PC-9 (cell line): ENCODE measurements at regions of chr14 and their contacts with region 1.

Region 1: GRCh38 chr14:63770187-63770807 is 42.4 kb upstream of the SGPP1 start:
- DNase-seq: peak; percentile 36 to 50
- H3K4me3 ChIP-seq: no peak overlapping the region
- H3K27ac ChIP-seq: no peak overlapping the region
- H3K4me1 ChIP-seq: no peaks in the 10 kb centered on the region
- H3K27me3 ChIP-seq: no peaks in the 10 kb centered on the region
- CTCF ChIP-seq: peak; percentile 84

Region 2: GRCh38 chr14:63388763-63389431 is 381.4 kb before region 1 on chr14:
- CTCF ChIA-PET with region 1: no interaction called
- POLR2A ChIA-PET with region 1: no interaction called
- intact Hi-C with region 1: loop called (anchors 1 kb)
- DNase-seq: peak in 1 of 2 experiments; percentile 57
- H3K4me3 ChIP-seq: no peak overlapping the region
- H3K27ac ChIP-seq: no peak overlapping the region
- H3K4me1 ChIP-seq: no peaks in the 10 kb centered on the region
- H3K27me3 ChIP-seq: no peaks in the 10 kb centered on the region
- CTCF ChIP-seq: peak; percentile 84

Region 3: GRCh38 chr14:63632932-63633514 is 137.3 kb before region 1 on chr14:
- CTCF ChIA-PET with region 1: no interaction called
- POLR2A ChIA-PET with region 1: no interaction called
- intact Hi-C with region 1: loop called (anchors 1 kb)
- DNase-seq: peak in 1 of 2 experiments; percentile 44
- H3K4me3 ChIP-seq: no peak overlapping the region
- H3K27ac ChIP-seq: no peak overlapping the region
- H3K4me1 ChIP-seq: no peaks in the 10 kb centered on the region
- H3K27me3 ChIP-seq: no peaks in the 10 kb centered on the region
- CTCF ChIP-seq: peak; percentile 75

Region 4: GRCh38 chr14:63705561-63706070 is 64.7 kb before region 1 on chr14:
- CTCF ChIA-PET with region 1: interaction called, 3 read pairs
- POLR2A ChIA-PET with region 1: interaction called, 18 read pairs
- intact Hi-C with region 1: no loop called
- DNase-seq: no peak
- H3K4me3 ChIP-seq: no peak overlapping the region
- H3K27ac ChIP-seq: no peak overlapping the region
- H3K4me1 ChIP-seq: no peaks in the 10 kb centered on the region
- H3K27me3 ChIP-seq: no peaks in the 10 kb centered on the region
- CTCF ChIP-seq: no peak

Region 5: DNA sequence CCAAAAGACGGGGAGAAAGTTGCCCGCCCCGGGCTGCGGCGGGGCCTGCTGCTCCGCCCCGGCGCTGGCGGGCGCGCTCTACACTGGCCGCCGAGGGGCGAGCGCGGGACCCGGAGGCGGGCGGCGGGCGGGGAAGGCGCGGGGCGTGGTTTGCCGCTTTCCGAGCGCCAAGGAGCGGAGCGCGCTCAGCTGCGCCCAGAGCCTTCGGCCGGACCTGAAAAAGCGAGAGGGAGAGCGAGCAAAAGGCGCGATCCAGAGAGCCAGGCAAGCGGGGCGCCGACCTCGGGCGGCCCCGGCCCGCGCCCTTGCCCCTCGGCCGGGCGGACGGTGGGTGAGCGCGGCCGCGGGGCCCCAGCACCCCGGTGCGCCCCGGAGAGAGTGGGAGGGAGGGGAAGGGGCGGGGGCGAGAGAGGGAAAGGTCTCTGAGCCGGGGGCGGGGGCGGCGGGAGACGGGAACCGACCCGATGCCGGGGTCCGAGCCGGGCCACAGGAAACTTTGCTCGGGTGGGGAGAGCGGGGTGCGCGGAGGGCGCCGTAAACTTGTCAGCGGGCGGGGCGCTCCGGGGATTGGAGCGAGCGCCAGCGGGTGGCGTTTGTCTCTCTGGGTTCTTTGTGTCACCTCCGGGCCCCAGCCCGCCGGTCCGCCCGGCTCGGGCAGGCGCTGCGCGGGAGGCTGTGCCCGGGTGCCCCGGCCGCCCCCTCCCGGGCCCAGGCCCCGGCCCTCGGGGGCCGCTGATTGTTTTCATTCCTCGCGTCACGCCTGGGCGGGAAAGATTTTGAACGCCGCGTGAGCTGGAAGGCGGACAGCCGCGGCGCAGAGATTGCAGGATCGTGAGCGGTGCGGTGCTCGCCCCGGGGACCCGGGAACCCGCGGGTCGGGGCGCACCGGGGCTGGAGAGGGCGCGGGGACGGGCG is 82.8 kb after region 1 on chr14 and contains the start of gene SYNE2:
- CTCF ChIA-PET with region 1: no interaction called
- POLR2A ChIA-PET with region 1: no interaction called
- intact Hi-C with region 1: no loop called
- DNase-seq: peak; percentile 52 to 87
- H3K4me3 ChIP-seq: peak within 1 kb of the TSS; percentile 72
- H3K27ac ChIP-seq: no peak within 1 kb of the TSS
- H3K4me1 ChIP-seq: peaks cover 23% of the 10 kb centered on the region
- H3K27me3 ChIP-seq: no peaks in the 10 kb centered on the region
- CTCF ChIP-seq: no peak
- total RNA-seq, gene SYNE2: 90.3 and 94.2 TPM in 2 replicates

Region 6: DNA sequence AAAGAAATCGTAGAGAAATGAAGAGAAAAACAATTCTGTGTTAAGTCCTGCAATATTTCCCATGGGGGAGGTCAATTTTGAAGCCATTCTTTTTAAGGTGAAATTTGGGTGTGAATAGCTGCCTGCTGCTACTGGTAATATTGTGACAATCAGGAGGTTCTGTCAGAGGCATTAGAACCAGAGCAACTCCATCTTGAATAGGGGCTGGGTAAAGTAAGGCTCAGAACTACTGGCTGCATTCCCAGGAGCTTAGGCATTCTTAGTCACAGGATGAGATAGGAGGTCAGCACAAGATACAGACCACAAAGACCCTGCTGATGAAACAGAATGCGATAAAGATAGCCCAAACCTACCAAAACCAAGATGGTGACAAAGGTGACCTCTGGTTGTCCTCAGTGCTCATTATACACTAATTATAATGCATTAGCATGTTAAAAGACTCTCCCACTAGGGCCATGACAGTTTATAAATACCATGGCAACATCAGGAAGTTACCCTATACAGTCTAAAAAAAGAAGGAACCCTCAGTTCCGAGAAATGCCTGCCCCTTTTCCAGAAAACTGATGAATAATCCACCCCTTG is 593.1 kb after region 1 on chr14:
- CTCF ChIA-PET with region 1: no interaction called
- POLR2A ChIA-PET with region 1: interaction called, 14 read pairs
- intact Hi-C with region 1: no loop called
- DNase-seq: no peak
- H3K4me3 ChIP-seq: no peak overlapping the region
- H3K27ac ChIP-seq: no peak overlapping the region
- H3K4me1 ChIP-seq: peaks cover 6% of the 10 kb centered on the region
- H3K27me3 ChIP-seq: no peaks in the 10 kb centered on the region
- CTCF ChIP-seq: no peak